OCI-LY7 (cell line): ENCODE measurements at regions of chr6 and their contacts with region 1.

Region 1: GRCh38 chr6:43174263-43175112 is 3.4 kb downstream of the SRF start:
- DNase-seq: peak; percentile 97
- H3K4me3 ChIP-seq: peak overlapping the region; percentile 90
- H3K27ac ChIP-seq: peak overlapping the region; percentile 35
- H3K4me1 ChIP-seq: peaks cover 34% of the 10 kb centered on the region
- CTCF ChIP-seq: no peak

Region 2: GRCh38 chr6:42563697-42564505 is 610.6 kb before region 1 on chr6 and contains the start of gene UBR2:
- CTCF ChIA-PET with region 1: no interaction called
- POLR2A ChIA-PET with region 1: no interaction called
- intact Hi-C with region 1: loop called (anchors 10 kb)
- DNase-seq: peak; percentile 99
- H3K4me3 ChIP-seq: peak within 1 kb of the TSS; percentile 88
- H3K27ac ChIP-seq: peak within 1 kb of the TSS; percentile 54
- H3K4me1 ChIP-seq: peaks cover 20% of the 10 kb centered on the region
- CTCF ChIP-seq: peak; percentile 75
- total RNA-seq, gene UBR2: 16.6 and 17.1 TPM in 2 replicates

Region 3: GRCh38 chr6:42661540-42662153 is 512.8 kb before region 1 on chr6:
- CTCF ChIA-PET with region 1: no interaction called
- POLR2A ChIA-PET with region 1: no interaction called
- intact Hi-C with region 1: no loop called
- DNase-seq: peak; percentile 81
- H3K4me3 ChIP-seq: no peak overlapping the region
- H3K27ac ChIP-seq: no peak overlapping the region
- H3K4me1 ChIP-seq: no peaks in the 10 kb centered on the region
- CTCF ChIP-seq: peak; percentile 100

Region 4: GRCh38 chr6:43009124-43009523 is 165.4 kb before region 1 on chr6:
- CTCF ChIA-PET with region 1: no interaction called
- POLR2A ChIA-PET with region 1: no interaction called
- intact Hi-C with region 1: no loop called
- DNase-seq: peak; percentile 74
- H3K4me3 ChIP-seq: no peak overlapping the region
- H3K27ac ChIP-seq: no peak overlapping the region
- H3K4me1 ChIP-seq: peaks cover 19% of the 10 kb centered on the region
- CTCF ChIP-seq: peak; percentile 88

Region 5: GRCh38 chr6:43228951-43229802 is 54.7 kb after region 1 on chr6 and contains the start of gene DNPH1:
- CTCF ChIA-PET with region 1: interaction called, 4 read pairs
- POLR2A ChIA-PET with region 1: interaction called, 6 read pairs
- intact Hi-C with region 1: loop called (anchors 2 kb)
- DNase-seq: peak; percentile 80
- H3K4me3 ChIP-seq: peak within 1 kb of the TSS; percentile 78
- H3K27ac ChIP-seq: peak within 1 kb of the TSS; percentile 18
- H3K4me1 ChIP-seq: peaks cover 37% of the 10 kb centered on the region
- CTCF ChIP-seq: peak; percentile 86
- total RNA-seq, gene DNPH1: 111 and 126 TPM in 2 replicates

Region 6: DNA sequence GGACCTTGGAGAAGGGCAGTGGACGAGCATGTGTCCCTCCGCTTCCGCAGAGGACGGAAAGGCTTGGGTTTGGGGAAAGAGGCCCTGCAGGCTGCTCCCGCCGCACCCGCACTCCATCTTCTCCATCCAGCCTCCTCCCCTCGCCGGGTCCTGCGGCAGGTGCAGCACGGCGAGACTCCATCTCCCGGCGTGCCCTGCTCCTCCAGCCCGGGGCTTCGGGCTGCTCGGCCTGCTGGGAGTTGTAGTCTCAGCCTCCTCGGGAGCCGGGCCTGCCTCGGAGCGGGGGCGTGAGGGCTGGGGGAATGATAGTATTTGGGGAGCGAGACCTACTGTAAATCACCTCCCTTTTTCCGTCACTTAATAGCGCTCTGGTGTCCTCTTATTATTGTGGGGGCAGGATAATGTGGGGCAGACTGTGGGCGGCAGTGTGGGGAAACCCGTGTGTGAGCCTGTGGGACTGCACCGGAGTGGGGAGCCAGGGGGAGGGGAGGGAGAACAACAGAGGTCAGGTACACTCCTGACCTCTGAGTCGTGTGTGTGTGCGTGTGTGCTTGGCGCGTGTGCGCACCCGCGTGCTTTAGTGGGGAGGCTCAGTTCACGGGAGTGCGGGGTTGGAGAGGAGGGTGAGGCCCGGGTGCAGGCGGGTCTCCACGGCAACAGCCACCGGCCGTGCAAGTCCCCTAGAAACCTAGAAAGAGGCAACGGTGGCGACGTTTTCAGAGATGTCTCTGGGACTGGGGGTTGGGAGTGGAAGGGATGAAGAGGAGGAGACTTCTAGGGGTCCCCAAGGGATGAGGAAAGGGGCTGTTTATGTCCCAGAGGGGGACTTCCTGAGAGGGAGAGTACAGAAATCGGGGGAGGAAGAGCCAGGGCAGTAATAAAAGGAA is 72.9 kb after region 1 on chr6:
- CTCF ChIA-PET with region 1: no interaction called
- POLR2A ChIA-PET with region 1: no interaction called
- intact Hi-C with region 1: loop called (anchors 1 kb)
- DNase-seq: peak; percentile 89
- H3K4me3 ChIP-seq: peak overlapping the region; percentile 72
- H3K27ac ChIP-seq: no peak overlapping the region
- H3K4me1 ChIP-seq: peaks cover 20% of the 10 kb centered on the region
- CTCF ChIP-seq: peak; percentile 27; the same call in 1 of the 2 replicates

Region 7: DNA sequence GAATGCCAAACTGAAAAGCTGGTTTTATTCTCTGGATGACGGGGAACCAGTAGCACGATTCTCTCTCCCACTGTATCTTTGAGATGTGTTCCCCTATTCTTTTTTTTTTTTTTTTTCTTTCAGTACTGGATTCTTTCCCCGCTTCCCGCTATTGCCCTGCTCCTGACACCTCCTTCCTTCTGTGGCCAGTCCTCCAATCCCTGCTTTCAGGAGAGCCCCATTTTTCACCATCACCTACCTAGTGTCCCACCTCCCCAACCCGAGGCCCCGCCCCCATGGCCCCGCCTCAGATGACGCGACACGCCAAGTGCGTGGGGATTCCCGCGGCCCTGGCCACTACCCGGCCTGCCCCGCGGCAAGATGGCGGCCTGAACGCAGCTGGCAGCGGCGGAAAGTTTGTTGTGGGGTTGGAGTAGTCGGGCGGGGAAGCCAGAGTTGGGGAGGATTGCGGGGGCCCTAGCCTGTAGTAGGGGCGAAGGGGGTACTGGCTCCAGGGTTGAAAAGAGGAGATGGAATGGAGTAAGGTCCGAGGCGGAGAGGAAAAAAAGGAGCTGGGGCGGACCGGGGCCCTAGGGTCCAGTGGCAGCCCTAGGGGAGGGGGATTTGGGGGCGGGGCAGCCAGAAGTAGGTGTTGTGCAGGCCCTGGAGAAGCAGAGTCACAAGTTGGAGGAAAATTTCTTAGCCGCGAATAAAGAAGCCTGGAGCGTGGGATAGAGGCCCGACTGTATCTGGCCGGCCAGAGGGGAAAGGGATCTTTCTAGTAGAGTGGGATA is 302.9 kb after region 1 on chr6 and contains the start of gene TJAP1:
- CTCF ChIA-PET with region 1: no interaction called
- POLR2A ChIA-PET with region 1: no interaction called
- intact Hi-C with region 1: loop called (anchors 5 kb)
- DNase-seq: peak; percentile 90
- H3K4me3 ChIP-seq: peak within 1 kb of the TSS; percentile 82
- H3K27ac ChIP-seq: no peak within 1 kb of the TSS
- H3K4me1 ChIP-seq: peaks cover 18% of the 10 kb centered on the region
- CTCF ChIP-seq: no peak
- total RNA-seq, gene TJAP1: 16.7 and 22.0 TPM in 2 replicates